ENCODE measurements at regions of chr17 and their contacts with region 1.

Region 1: DNA sequence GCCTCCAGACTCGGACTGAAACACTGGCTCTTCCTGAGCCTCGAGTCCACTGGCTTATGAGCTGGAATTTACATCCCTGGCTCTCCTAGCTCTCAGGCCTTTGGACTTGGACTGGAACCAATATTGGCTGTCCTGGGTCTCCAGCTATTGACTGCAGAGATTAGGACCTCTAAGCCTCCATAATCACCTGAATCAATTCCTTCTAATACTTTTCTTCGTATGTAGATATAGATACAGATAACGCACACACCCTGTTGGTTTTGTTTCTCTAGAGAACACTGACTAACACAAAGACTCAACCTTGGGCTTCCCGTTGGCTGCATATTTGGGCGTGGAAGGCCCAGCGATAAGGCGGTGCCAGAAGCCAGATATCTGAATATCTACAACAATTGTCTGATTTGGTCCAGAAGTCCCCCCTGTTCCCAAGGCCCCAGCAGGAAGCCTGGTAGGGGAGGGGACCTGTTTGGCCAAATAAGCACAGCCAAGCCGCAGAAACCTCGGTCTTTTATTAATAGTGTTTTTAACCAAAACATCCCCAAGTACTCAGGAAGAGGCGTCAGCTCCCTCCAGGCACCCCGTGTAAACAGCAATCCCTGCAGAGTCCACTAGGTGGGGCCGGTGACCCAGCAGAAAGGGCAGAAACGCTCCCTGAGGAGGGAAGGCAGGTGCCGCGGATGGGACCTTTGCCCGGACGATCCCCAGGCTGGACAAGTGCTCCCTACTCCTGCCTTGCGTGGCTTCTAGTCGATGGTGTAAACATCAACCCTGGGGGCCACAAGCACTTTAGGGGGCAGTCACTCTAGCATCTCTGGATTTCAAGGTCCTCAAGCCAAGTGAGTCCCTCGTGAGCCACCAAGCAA is 57.0 kb downstream of the ABR start:
- DNase-seq: peak; percentile 85 to 93 (median 87)
- ATAC-seq: peak; percentile 70 to 88 (median 82)
- H3K4me3 ChIP-seq: no peak overlapping the region
- H3K27ac ChIP-seq: peak overlapping the region; percentile 23 to 81 (median 60)
- H3K4me1 ChIP-seq: peaks cover 0 to 45% (median 20%) of the 10 kb centered on the region in 12 donors
- H3K27me3 ChIP-seq: no peaks in the 10 kb centered on the region
- CTCF ChIP-seq: peak; percentile 88 to 97 (median 94)
- POLR2A ChIP-seq: no peak

Region 2: DNA sequence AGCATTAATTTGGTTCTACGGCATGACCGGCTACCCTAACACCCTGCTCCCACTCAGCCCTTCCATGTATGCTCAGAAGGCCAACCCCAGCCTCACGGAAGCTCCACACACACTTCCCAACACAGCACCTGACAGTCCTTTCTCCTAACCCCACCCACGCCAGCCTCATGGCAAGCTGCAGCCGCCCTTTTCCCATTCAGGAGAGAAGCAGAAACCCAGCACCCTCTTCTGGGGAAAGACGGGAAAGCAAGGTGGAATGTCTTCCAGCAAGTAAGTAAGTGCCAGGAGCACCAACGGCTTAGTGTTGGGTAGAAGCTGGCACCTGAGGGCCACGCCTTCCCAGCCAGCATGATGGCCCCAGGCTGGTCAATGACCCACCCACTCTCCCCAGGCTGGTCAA is 24.9 kb after region 1 on chr17:
- intact Hi-C with region 1: loop called in 3 of 10 experiments (anchors 1 to 2 kb)
- DNase-seq: peak in 3 of 5 donors; percentile 43 to 67 (median 50)
- ATAC-seq: peak in 3 of 4 donors; percentile 27 to 41 (median 28)
- H3K4me3 ChIP-seq: no peak overlapping the region
- H3K27ac ChIP-seq: no peak overlapping the region
- H3K4me1 ChIP-seq: peaks cover 0 to 49% (median 13%) of the 10 kb centered on the region in 12 donors
- H3K27me3 ChIP-seq: no peaks in the 10 kb centered on the region
- CTCF ChIP-seq: peak; percentile 13 to 60 (median 42)
- POLR2A ChIP-seq: no peak

Region 3: DNA sequence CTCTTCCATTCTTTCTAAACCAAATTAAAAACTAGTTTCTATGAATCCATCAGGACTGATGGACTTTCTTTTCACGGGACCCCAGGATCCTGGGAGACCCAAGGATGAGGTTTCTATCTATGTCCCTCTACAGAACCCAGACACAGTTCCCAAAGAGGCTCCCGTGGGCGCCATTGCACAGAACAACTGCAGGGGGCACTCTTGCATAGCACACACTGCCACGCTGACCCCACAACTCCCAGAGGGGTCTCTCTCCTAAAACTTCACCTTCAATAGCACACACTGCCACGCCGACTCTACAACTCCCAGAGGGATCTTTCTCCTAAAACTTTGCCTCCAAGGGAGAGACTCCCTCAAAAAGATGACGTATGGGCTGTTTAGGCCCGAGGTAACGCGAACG is 48.0 kb after region 1 on chr17:
- intact Hi-C with region 1: no loop called
- DNase-seq: no peak
- ATAC-seq: no peak
- H3K4me3 ChIP-seq: no peak overlapping the region
- H3K27ac ChIP-seq: no peak overlapping the region
- H3K4me1 ChIP-seq: peaks cover 6 to 77% (median 37%) of the 10 kb centered on the region in 12 donors
- H3K27me3 ChIP-seq: no peaks in the 10 kb centered on the region
- CTCF ChIP-seq: peak in 3 of 12 donors; percentile 4 to 14 (median 13)
- POLR2A ChIP-seq: no peak

Region 4: DNA sequence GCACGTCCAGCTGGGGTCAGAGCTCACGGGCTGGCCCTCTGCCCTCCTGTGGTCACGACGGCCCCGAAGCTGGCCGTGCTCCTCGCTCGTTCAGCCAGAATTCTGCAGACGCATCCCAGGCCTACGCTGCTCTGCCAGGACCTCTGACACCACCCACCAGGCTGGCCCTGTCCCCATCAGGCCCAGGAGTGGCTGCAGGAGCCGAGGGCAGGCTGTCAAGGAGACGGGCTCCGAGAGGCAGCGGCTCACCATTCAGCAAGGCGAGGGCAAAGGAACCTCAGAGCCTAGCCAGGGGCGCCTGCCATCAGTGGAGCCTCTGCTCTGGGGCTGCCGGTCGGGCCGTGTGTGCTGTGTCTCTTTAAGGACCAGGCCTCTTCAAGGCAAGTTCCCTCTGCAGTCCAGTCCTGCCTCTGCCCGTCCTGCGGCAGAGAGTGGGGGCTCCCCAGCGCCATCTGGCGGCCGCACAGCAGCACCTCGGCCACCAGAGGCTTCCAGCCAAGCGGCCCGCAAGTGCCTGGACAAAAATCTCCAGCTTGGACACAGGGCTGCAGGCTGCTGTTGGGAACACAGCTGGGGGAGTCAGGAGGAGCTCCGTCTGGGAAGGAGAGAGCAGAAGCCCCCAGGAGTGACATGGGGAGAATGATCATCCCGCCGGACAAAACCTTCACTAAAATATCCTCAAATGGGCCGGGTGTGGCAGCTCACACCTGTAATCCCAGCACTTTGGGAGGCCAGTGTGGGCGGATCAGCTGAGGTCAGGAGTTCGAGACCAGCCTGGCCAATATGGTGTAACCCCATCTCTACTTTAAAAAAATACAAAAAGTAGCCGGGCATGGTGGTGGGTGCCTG is 64.4 kb after region 1 on chr17:
- intact Hi-C with region 1: loop called (anchors 1 to 2 kb)
- DNase-seq: peak; percentile 89 to 93 (median 91)
- ATAC-seq: peak; percentile 84 to 93 (median 91)
- H3K4me3 ChIP-seq: peak overlapping the region; percentile 18 to 59 (median 48)
- H3K27ac ChIP-seq: peak overlapping the region; percentile 14 to 90 (median 84)
- H3K4me1 ChIP-seq: peaks cover 2 to 66% (median 47%) of the 10 kb centered on the region in 12 donors
- H3K27me3 ChIP-seq: no peaks in the 10 kb centered on the region
- CTCF ChIP-seq: peak; percentile 98 to 99 (median 98)
- POLR2A ChIP-seq: peak in 1 of 2 donors; percentile 36

Region 5: GRCh38 chr17:1260086-1260769 is 137.5 kb after region 1 on chr17:
- intact Hi-C with region 1: loop called in 2 of 10 experiments (anchors 5 kb)
- DNase-seq: no peak
- ATAC-seq: peak in 1 of 4 donors; percentile 19
- H3K4me3 ChIP-seq: peak overlapping the region; percentile 9 to 66 (median 51)
- H3K27ac ChIP-seq: peak overlapping the region in 2 of 12 donors; percentile 40 to 77
- H3K4me1 ChIP-seq: peaks cover 0 to 21% (median 8%) of the 10 kb centered on the region in 12 donors
- H3K27me3 ChIP-seq: peaks cover 0 to 12% (median 0%) of the 10 kb centered on the region in 9 donors
- CTCF ChIP-seq: no peak
- POLR2A ChIP-seq: no peak

Region 6: GRCh38 chr17:1323336-1323735 is 200.6 kb after region 1 on chr17:
- intact Hi-C with region 1: loop called in 1 of 10 experiments (anchors 10 kb)
- DNase-seq: no peak
- ATAC-seq: no peak
- H3K4me3 ChIP-seq: no peak overlapping the region
- H3K27ac ChIP-seq: no peak overlapping the region
- H3K4me1 ChIP-seq: peaks cover 0 to 8% (median 0%) of the 10 kb centered on the region in 12 donors
- H3K27me3 ChIP-seq: no peaks in the 10 kb centered on the region
- CTCF ChIP-seq: no peak
- POLR2A ChIP-seq: no peak

Region 7: DNA sequence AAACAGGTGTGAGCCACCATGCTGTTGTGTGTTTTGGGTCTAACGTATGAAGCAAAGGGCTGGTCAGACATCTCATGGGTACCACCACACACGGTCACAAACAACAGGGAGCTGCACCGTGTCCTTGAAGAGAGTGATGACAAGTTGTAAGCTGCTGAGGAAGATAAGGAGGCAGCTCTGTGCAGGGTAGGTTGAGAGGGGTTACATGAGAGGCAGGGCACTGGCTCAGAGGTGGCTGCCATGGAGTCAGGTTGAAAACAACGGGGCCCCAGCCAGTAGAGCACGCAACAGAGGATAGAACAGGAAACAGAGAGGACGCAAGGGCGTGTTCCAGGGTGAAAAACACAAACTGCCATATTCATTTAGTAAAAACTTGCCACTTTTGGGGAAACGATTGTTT is 208.9 kb after region 1 on chr17:
- intact Hi-C with region 1: loop called in 3 of 10 experiments (anchors 5 to 10 kb)
- DNase-seq: peak in 4 of 5 donors; percentile 29 to 74 (median 58)
- ATAC-seq: peak; percentile 98
- H3K4me3 ChIP-seq: no peak overlapping the region
- H3K27ac ChIP-seq: no peak overlapping the region
- H3K4me1 ChIP-seq: peaks cover 0 to 17% (median 7%) of the 10 kb centered on the region in 12 donors
- H3K27me3 ChIP-seq: no peaks in the 10 kb centered on the region
- CTCF ChIP-seq: no peak
- POLR2A ChIP-seq: no peak

Measured in heart left ventricle (tissue), 16 donors.